PC-9 (cell line): ENCODE measurements at regions of chr3 and their contacts with region 1.

Region 1: GRCh38 chr3:150348500-150348899 is 59.6 kb upstream of the TSC22D2 start:
- DNase-seq: peak; percentile 64 to 98
- H3K4me3 ChIP-seq: no peak overlapping the region; the same call in 1 of the 2 replicates
- H3K27ac ChIP-seq: peak overlapping the region; percentile 87
- H3K4me1 ChIP-seq: peaks cover 69% of the 10 kb centered on the region
- H3K27me3 ChIP-seq: no peaks in the 10 kb centered on the region
- CTCF ChIP-seq: no peak

Region 2: DNA sequence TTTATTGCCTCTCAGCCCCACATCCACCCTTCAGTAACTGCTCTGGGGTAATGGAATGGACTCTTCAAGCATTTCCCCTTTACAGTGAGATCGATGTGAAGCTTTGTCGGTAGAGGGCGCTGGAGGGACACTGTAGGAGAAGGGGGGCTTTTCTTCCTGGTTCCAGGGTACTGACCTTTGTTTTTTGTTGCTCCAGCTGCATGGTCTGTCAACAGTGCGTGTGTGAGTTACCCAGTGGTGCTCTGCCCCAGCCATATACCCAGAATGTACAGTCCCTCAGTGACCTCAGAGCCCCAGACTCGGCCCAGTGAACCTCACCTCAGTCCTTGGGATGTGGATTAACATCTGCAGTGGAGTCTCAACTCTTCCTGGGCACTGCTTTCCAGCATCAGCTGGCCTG is 120.7 kb before region 1 on chr3:
- CTCF ChIA-PET with region 1: no interaction called
- POLR2A ChIA-PET with region 1: no interaction called
- intact Hi-C with region 1: no loop called
- DNase-seq: peak in 1 of 2 experiments; percentile 65
- H3K4me3 ChIP-seq: no peak overlapping the region
- H3K27ac ChIP-seq: no peak overlapping the region
- H3K4me1 ChIP-seq: no peaks in the 10 kb centered on the region
- H3K27me3 ChIP-seq: no peaks in the 10 kb centered on the region
- CTCF ChIP-seq: peak; percentile 82

Region 3: DNA sequence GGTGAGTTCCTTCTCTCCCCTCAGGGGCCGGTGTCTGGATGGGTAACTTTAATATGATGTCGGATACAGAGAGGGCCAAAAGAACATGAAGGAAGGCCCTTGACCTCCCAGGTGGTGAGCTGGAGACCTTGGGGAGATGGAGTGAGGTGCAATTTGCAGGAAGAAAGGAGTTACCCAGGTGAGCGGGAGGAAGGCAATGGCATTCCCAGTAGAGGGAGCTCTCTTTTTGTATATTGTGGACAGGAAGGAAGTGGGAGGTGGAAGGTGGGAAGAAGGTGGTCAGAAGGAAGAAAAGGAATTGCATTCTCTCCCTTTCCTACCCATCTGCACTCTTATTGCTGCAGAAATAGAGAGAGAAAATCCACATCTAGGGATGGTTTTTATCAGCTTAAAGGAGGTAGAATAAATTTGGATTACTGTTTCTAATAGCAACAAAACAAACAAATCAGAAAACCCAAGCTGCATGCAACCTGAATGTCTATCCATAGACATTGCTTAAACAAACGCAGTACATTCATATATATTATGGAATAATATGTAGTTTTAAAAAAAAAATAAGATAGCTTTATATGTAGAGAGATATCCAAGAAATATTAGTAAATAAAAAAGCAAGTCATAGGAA is 109.4 kb before region 1 on chr3:
- CTCF ChIA-PET with region 1: no interaction called
- POLR2A ChIA-PET with region 1: no interaction called
- intact Hi-C with region 1: loop called (anchors 2 kb)
- DNase-seq: peak; percentile 36 to 41
- H3K4me3 ChIP-seq: peak overlapping the region; percentile 37; the same call in 1 of the 2 replicates
- H3K27ac ChIP-seq: peak overlapping the region; percentile 91
- H3K4me1 ChIP-seq: peaks cover 43% of the 10 kb centered on the region
- H3K27me3 ChIP-seq: no peaks in the 10 kb centered on the region
- CTCF ChIP-seq: peak; percentile 62

Region 4: GRCh38 chr3:150314248-150315004 is 34.1 kb before region 1 on chr3:
- CTCF ChIA-PET with region 1: interaction called, 4 read pairs
- POLR2A ChIA-PET with region 1: interaction called, 9 read pairs
- intact Hi-C with region 1: loop called (anchors 1 kb)
- DNase-seq: peak; percentile 75 to 92
- H3K4me3 ChIP-seq: no peak overlapping the region
- H3K27ac ChIP-seq: peak overlapping the region; percentile 36
- H3K4me1 ChIP-seq: peaks cover 60% of the 10 kb centered on the region
- H3K27me3 ChIP-seq: no peaks in the 10 kb centered on the region
- CTCF ChIP-seq: no peak

Region 5: DNA sequence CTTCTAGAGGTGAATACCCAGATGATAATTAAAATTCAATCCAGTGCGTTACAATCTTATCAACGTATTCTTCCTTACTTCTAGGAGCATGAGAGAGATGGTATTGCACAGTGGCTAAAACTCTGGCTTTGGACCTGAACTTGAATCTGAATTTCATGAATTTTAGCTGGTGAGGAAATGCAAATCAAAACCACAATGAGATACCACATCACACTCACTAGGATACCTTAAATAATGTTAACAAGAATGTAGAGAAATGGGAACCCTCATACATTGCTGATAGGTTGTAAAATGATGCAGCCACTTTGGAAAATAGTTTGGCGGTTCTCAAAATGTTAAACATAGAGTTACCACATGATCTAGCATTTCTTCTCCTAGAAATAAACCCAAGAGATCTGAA is 12.5 kb after region 1 on chr3:
- CTCF ChIA-PET with region 1: interaction called, 4 read pairs
- POLR2A ChIA-PET with region 1: interaction called, 12 read pairs
- intact Hi-C with region 1: no loop called
- DNase-seq: no peak
- H3K4me3 ChIP-seq: no peak overlapping the region
- H3K27ac ChIP-seq: no peak overlapping the region
- H3K4me1 ChIP-seq: peaks cover 35% of the 10 kb centered on the region
- H3K27me3 ChIP-seq: no peaks in the 10 kb centered on the region
- CTCF ChIP-seq: no peak

Region 6: DNA sequence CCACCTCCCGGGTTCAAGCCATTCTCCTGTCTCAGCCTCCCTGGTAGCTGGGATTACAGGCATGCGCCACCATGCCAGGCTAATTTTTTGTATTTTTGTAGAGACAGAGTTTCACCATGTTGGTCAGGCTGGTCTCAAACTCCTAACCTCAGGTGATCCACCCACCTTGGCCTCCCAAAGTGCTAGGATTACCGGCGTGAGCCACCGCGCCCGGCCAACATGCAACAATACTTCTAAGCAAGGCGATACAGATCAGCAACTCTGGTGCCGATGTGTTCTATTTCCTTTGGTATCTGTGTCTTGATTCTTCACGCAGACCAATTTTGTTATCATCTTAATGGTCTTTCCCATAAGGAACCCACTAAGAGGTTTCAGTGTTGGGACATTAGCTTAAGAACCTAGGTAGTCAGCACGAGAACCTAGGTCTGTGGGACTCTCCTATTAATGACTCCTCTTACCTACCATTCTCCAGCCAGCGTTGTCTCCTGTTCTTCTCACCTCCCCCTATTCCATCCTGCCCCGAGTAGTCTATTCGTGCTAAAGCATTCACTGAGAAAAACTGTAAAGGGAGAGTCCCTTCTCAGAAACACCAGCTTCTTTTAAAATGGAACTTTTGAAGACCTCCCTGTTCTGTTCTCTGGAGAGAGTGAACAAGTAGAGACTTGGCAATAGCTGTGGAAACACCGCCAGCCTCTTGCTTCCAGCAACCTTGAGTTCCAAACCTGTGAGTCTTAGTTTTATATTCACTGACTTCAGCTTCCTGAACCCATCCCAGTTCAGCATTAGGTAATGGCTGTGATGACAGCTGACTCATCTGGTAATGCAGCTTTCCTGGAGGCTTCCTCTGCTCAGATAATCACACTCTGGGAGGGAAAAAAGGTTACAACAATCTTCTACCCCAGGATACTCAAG is 120.8 kb after region 1 on chr3:
- CTCF ChIA-PET with region 1: interaction called, 4 read pairs
- POLR2A ChIA-PET with region 1: interaction called, 7 read pairs
- intact Hi-C with region 1: loop called (anchors 1 kb)
- DNase-seq: peak; percentile 76 to 97
- H3K4me3 ChIP-seq: peak overlapping the region; percentile 38; the same call in 1 of the 2 replicates
- H3K27ac ChIP-seq: peak overlapping the region; percentile 89
- H3K4me1 ChIP-seq: peaks cover 53% of the 10 kb centered on the region
- H3K27me3 ChIP-seq: no peaks in the 10 kb centered on the region
- CTCF ChIP-seq: no peak

Region 7: GRCh38 chr3:150546226-150547044 is 197.9 kb after region 1 on chr3 and contains the starts of genes EIF2A and SERP1:
- CTCF ChIA-PET with region 1: no interaction called
- POLR2A ChIA-PET with region 1: no interaction called
- intact Hi-C with region 1: loop called (anchors 5 kb)
- DNase-seq: peak; percentile 96 to 99
- H3K4me3 ChIP-seq: peak within 1 kb of the TSS; percentile 82
- H3K27ac ChIP-seq: peak within 1 kb of the TSS; percentile 93
- H3K4me1 ChIP-seq: peaks cover 27% of the 10 kb centered on the region
- H3K27me3 ChIP-seq: no peaks in the 10 kb centered on the region
- CTCF ChIP-seq: no peak
- total RNA-seq, gene EIF2A: 96.4 and 102 TPM in 2 replicates
- total RNA-seq, gene SERP1: 106 and 113 TPM in 2 replicates